OCI-LY7 (cell line): ENCODE measurements at regions of chr17 and their contacts with region 1.

Region 1: DNA sequence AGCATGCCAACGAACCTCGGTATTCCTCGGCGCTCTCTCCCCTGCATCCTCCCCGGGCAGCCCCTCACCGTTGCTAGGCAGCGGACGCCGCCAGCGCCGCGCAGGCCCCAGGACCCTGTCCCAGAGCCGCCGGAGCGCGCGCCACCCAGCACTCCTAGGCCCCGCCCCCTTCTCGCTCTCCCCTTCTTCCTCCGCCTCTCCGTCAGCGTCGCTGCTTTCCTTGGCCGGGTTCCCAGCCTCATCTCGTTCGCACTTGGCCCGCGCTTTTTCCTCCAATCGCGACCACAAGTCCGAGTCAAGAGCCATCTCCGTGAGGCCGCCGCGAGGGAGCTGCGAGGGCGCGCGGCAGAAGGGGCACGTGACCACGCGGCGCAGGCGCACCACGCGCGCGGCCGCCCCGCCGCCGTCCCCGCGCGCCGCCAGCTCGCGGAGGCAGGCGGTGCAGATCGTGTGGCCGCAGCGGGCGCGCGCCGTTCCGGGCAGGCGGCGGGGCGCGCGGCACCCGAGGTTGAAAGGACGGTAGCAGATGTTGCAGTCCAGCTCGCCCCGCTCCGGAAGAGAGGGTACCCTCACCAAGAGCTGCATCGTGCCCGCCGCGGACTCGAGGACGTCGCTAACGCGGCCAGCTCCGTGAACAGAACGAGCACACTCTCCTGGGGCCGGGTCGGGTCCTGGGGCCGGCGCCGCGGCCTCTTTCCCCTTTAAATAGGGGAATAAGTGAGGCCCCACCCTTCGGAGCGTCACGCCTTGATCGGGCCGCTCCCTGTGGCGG is at the start of gene RNF227:
- DNase-seq: peak; percentile 83
- H3K4me3 ChIP-seq: peak within 1 kb of the TSS; percentile 76
- H3K27ac ChIP-seq: peak within 1 kb of the TSS; percentile 70
- H3K4me1 ChIP-seq: peaks cover 39% of the 10 kb centered on the region
- CTCF ChIP-seq: no peak
- total RNA-seq, gene RNF227: 3.8 and 9.6 TPM in 2 replicates

Region 2: GRCh38 chr17:7862692-7863437 is 52.9 kb before region 1 on chr17:
- CTCF ChIA-PET with region 1: no interaction called
- POLR2A ChIA-PET with region 1: interaction called, 4 read pairs
- intact Hi-C with region 1: loop called (anchors 2 kb)
- DNase-seq: peak; percentile 69
- H3K4me3 ChIP-seq: peak overlapping the region; percentile 6
- H3K27ac ChIP-seq: peak overlapping the region; percentile 27
- H3K4me1 ChIP-seq: peaks cover 49% of the 10 kb centered on the region
- CTCF ChIP-seq: peak; percentile 91

Region 3: DNA sequence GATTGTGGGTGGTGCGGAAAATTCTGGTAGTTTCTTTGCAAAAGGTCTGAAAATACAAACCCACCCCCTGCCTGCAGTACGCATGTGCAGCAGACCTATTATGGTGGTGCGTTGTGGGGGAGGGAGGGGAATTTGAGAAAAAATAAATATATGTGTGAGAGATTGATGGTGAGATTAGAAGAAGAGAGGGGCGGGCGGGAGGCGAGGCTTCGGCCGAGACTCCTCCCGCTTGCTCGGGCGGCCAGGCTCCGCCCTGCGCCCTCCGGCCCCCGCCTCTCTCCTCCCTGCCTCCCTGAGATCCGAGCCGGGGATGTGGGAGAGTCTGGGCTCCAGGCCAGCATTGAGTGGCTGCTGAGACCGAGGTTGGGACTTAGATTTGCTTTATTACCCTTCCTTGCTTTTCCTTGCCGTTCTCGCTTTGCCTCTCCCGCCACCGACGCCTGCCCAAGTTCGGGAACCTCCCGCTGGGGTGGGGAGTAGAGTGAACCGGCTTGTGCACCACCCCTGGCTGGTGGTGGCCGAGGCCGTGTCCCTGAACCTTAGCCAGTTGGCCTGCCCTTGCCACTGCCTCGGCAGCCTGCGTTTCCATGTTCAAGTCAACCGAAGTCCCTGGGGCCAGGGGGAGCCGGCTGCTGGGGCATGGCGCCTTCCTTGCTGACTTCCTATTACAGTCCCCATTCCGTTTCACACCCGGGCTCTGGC is 28.2 kb before region 1 on chr17:
- CTCF ChIA-PET with region 1: no interaction called
- POLR2A ChIA-PET with region 1: interaction called, 3 read pairs
- intact Hi-C with region 1: loop called (anchors 2 kb)
- DNase-seq: peak; percentile 90
- H3K4me3 ChIP-seq: peak overlapping the region; percentile 95
- H3K27ac ChIP-seq: peak overlapping the region; percentile 90
- H3K4me1 ChIP-seq: peaks cover 28% of the 10 kb centered on the region
- CTCF ChIP-seq: peak; percentile 18; the same call in 1 of the 2 replicates

Region 4: DNA sequence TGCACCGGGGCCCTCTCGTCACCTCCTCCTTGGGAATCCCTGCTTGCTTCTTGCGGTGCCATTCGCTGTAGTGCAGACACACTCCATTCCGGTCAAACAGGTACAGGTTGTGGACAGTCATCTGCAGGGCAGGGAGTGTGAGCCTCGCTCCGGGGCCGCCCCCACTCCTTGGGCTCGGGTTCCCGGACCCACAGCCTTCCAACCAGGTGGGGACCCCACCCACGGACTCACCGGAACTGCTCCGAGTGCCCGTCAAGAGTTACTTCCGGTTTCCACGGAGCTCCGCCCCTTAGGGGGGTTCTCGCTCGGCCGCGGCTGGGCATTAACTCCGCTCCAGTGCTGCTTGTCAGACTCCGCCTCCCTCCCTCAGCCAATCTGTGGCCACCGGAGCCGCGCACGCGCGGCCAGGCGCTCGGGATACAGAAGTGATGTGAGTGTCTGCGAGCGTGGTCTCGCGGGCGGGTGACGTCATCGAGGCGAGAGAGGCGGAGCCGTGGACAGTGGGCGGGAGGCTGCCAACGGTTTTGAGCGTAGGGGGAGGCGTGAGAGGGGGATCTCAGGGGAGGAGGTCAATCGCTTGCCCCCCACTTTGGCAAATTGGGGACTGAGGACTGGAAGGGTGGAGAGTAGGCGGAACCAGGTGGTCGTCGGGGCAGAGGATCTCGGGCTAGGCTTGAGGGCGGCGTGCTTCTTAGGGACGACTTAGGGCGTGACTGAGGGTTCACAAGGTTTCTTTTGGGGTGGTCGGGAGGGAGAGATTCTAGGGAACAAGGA is 16.1 kb after region 1 on chr17 and contains the starts of genes CNTROB and TRAPPC1:
- CTCF ChIA-PET with region 1: no interaction called
- POLR2A ChIA-PET with region 1: interaction called, 7 read pairs
- intact Hi-C with region 1: loop called (anchors 2 kb)
- DNase-seq: peak; percentile 99
- H3K4me3 ChIP-seq: peak within 1 kb of the TSS; percentile 99
- H3K27ac ChIP-seq: peak within 1 kb of the TSS; percentile 69
- H3K4me1 ChIP-seq: peaks cover 27% of the 10 kb centered on the region
- CTCF ChIP-seq: no peak
- total RNA-seq, gene CNTROB: 49.1 and 55.4 TPM in 2 replicates
- total RNA-seq, gene TRAPPC1: 40.2 and 41.0 TPM in 2 replicates

Region 5: DNA sequence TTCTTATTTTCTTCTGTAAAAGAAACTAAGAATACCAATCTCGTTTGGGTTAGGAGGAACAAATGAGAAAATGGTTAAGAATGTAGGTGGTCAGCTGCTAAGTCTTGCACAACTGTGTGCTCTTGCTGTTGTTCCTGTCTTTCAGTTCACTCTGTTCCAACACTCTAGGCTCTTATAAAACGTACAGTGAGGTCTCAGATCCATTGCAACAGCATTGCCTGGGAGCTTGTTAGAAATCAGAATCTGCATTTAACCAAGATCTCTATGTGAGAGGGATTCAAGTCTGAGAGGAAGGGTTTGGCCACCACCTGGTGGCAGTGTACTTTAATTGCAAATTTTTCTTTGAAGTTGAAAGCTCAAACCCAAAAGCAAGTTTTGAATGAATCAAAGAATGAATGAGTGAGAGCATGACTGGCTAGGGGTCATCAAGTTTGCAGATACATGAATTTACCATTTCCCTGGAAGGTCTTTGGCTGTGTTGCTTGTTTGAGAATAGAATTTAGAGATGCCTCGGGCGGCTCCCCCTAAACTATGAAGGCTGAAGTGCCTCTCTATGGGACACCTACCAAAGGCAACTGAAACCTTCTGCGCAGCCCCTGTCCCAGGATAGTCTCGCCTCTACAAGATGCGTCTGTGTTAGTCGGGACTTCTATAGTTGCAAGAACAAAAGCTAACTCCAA is 125.6 kb after region 1 on chr17:
- CTCF ChIA-PET with region 1: no interaction called
- POLR2A ChIA-PET with region 1: no interaction called
- intact Hi-C with region 1: loop called (anchors 1 kb)
- DNase-seq: peak; percentile 76
- H3K4me3 ChIP-seq: no peak overlapping the region
- H3K27ac ChIP-seq: no peak overlapping the region
- H3K4me1 ChIP-seq: no peaks in the 10 kb centered on the region
- CTCF ChIP-seq: peak; percentile 92

Region 6: GRCh38 chr17:8057691-8058114 is 141.9 kb after region 1 on chr17:
- CTCF ChIA-PET with region 1: no interaction called
- POLR2A ChIA-PET with region 1: no interaction called
- intact Hi-C with region 1: loop called (anchors 5 kb)
- DNase-seq: peak; percentile 90
- H3K4me3 ChIP-seq: no peak overlapping the region
- H3K27ac ChIP-seq: no peak overlapping the region
- H3K4me1 ChIP-seq: peaks cover 27% of the 10 kb centered on the region
- CTCF ChIP-seq: peak; percentile 85

Region 7: DNA sequence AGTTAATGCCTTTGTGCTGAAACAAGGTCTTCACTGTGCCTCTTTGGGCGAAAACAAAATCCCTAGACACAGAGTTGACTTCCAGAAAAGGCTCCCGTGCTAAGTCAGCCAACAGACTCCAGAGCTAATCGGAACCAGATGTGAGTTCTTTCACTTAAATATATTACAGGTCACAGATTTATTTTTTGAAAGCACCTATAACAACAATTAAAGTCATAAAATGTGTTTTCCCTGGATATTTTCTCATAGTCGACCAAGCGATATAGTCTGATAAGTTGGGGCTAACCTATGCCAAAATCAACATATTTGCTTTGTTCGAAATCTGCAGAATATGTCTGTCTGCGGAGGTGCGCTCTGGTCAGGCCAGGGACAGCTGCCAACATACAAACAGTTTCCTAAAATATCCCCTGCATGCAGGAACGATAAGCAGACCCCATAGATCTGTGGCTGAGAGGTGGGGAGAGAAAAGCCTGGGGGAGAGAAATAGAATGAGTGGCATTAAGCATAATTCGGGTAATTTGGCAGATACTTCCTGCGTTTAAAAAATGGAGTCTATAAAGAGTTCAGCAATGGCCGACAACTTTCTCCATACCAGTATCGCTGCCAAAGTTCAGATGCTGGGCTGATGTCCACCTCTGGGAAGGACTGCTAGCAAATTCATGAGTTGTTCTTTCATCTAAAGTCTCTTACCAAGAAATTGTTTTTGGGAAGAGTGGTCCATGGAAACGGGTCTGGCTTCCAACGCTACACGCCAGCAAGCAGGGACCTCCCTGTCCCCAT is 765.6 kb after region 1 on chr17:
- CTCF ChIA-PET with region 1: no interaction called
- POLR2A ChIA-PET with region 1: no interaction called
- intact Hi-C with region 1: no loop called
- DNase-seq: no peak
- H3K4me3 ChIP-seq: no peak overlapping the region
- H3K27ac ChIP-seq: no peak overlapping the region
- H3K4me1 ChIP-seq: no peaks in the 10 kb centered on the region
- CTCF ChIP-seq: no peak